Endothelial cell of umbilical vein (primary cell): ENCODE measurements at regions of chr9 and their contacts with region 1.

Region 1: DNA sequence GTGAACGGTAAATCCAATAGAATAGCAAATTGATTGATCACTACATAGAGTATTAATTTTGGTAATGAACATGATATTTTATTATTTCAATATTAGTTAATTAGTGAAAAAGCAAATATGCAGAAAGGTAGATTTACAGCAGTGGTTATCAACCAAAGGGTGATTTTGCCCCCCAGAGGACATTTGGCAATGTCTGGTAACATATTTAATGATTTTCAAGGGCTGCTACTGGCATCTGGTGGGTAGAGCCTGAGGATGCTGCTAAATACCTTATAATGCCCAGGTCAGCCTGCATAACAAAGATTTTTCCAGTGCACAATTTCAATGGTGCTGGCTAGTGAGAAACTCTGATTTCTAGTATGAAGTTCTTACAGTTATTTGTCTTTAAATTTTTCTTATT is 1313.7 kb downstream of the PTPRD start:
- DNase-seq: no peak
- H3K4me3 ChIP-seq: no peak overlapping the region
- H3K27ac ChIP-seq: no peak overlapping the region
- H3K4me1 ChIP-seq: no peaks in the 10 kb centered on the region
- H3K27me3 ChIP-seq: no peaks in the 10 kb centered on the region
- CTCF ChIP-seq: no peak
- POLR2A ChIP-seq: no peak

Region 2: DNA sequence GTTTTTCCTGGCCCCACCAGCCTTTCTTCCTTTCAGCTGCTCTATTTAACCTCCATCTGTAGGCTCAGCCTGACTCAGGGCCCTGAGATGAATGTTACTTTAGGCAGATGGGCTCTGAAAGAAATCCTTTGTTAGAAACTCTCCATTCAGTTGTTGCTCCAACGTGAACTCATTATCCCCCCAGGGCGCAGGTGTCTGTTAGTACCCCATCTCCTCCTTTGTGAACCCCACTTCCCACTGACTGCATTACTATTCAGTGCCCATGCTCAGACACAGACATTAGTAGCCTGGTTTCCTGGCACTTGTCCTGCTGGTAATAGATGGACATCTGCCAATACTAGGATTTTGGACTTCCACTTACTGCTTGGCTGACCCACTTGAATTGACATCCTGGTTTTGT is 42.1 kb after region 1 on chr9:
- CTCF ChIA-PET with region 1: no interaction called
- POLR2A ChIA-PET with region 1: no interaction called
- dilution Hi-C with region 1: no loop called
- intact Hi-C with region 1: loop called (anchors 2 kb)
- DNase-seq: no peak
- H3K4me3 ChIP-seq: no peak overlapping the region
- H3K27ac ChIP-seq: no peak overlapping the region
- H3K4me1 ChIP-seq: no peaks in the 10 kb centered on the region
- H3K27me3 ChIP-seq: no peaks in the 10 kb centered on the region
- CTCF ChIP-seq: no peak
- POLR2A ChIP-seq: no peak

Region 3: DNA sequence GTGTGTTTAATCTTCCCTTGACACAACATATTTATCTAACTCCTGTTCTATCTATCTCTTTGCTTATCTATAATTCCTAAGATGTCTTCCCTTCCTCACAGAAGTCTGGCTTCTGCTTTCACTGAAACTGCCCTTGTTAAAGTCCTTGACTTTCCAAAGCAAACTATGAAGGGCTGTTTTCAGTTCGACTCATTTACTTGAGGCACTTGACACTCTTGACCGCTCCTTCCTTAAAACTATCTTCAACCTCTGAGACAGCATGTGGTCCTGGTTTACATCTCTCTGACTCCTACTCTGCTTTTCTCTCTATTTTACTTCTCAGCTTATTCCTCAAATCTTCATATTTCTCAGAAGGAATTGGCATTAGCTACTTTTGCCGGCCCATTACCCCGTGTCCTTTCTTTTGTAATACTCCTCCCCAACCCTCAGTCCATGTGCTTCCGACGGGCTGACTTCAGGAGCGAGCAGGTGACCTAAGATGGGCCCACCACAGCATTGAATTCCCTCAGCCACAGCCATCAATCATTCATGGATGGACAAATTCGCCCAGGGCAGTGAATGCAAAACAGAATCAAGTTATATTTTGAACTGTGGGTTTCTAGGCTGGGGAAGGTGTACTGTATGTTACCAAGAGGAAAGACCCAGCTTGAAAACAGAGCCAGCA is 224.5 kb after region 1 on chr9:
- CTCF ChIA-PET with region 1: no interaction called
- POLR2A ChIA-PET with region 1: no interaction called
- dilution Hi-C with region 1: no loop called
- intact Hi-C with region 1: no loop called
- DNase-seq: no peak
- H3K4me3 ChIP-seq: no peak overlapping the region
- H3K27ac ChIP-seq: no peak overlapping the region
- H3K4me1 ChIP-seq: no peaks in the 10 kb centered on the region
- H3K27me3 ChIP-seq: no peaks in the 10 kb centered on the region
- CTCF ChIP-seq: no peak
- POLR2A ChIP-seq: no peak